Gastrocnemius medialis (tissue), 4 donors: ENCODE measurements at regions of chr10 and their contacts with region 1.

Region 1: GRCh38 chr10:72702868-72703581 is 11.1 kb downstream of the MCU start:
- DNase-seq: no peak
- ATAC-seq: no peak
- H3K4me3 ChIP-seq: no peak overlapping the region
- H3K27ac ChIP-seq: peak overlapping the region; percentile 8 to 28 (median 23)
- H3K4me1 ChIP-seq: peaks cover 23 to 24% of the 10 kb centered on the region in 2 donors
- H3K27me3 ChIP-seq: no peaks in the 10 kb centered on the region
- CTCF ChIP-seq: no peak
- POLR2A ChIP-seq: no peak

Region 2: DNA sequence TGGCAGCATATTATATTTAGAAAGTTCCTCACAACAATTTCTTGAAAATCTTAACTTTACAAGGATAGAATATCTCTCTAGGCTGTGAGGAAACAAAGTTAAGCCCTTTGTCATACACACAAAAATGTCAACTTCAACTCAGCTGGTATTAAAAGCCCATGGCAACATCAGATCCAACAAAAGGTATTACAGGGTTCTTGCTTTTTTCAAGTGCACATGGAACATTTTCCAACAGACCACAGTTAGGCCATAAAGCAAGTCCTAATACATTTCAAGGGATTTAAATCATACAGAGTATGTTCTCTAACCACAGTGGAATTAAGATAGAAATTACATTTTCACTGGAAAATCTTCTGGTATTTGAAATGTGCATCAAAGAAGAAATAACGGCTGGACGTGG is 118.6 kb after region 1 on chr10:
- in situ Hi-C with region 1: loop called in 1 of 4 experiments (anchors 10 kb)
- intact Hi-C with region 1: no loop called
- DNase-seq: no peak
- ATAC-seq: no peak
- H3K4me3 ChIP-seq: no peak overlapping the region
- H3K27ac ChIP-seq: no peak overlapping the region
- H3K4me1 ChIP-seq: peaks cover 15 to 31% of the 10 kb centered on the region in 2 donors
- H3K27me3 ChIP-seq: no peaks in the 10 kb centered on the region
- CTCF ChIP-seq: no peak
- POLR2A ChIP-seq: no peak